Left cardiac atrium (tissue), 4 donors: ENCODE measurements at regions of chr11 and their contacts with region 1.

Region 1: GRCh38 chr11:63635762-63636465 is 21.7 kb upstream of the PLAAT3 start:
- DNase-seq: peak; percentile 45
- ATAC-seq: peak; percentile 78 to 85

Region 2: GRCh38 chr11:63042596-63042995 is 593.3 kb before region 1 on chr11:
- intact Hi-C with region 1: loop called in 1 of 2 experiments (anchors 5 kb)
- DNase-seq: no peak
- ATAC-seq: no peak

Region 3: GRCh38 chr11:63478896-63479295 is 157.0 kb before region 1 on chr11:
- intact Hi-C with region 1: loop called (anchors 1 to 2 kb)
- DNase-seq: peak; percentile 37
- ATAC-seq: peak; percentile 88 to 91

Region 4: GRCh38 chr11:63536669-63537292 is 99.1 kb before region 1 on chr11 and contains the start of gene PLAAT4:
- intact Hi-C with region 1: no loop called
- DNase-seq: peak; percentile 40
- ATAC-seq: peak; percentile 54 to 74
- total RNA-seq, gene PLAAT4: 11.3 to 16.6 TPM